Breast epithelium (tissue), 4 donors: ENCODE measurements at regions of chr1 and their contacts with region 1.

Region 1: GRCh38 chr1:244386595-244386994 is 65.1 kb downstream of the ADSS2 start:
- DNase-seq: no peak
- H3K4me3 ChIP-seq: no peak overlapping the region
- H3K27ac ChIP-seq: no peak overlapping the region
- H3K4me1 ChIP-seq: no peaks in the 10 kb centered on the region
- H3K27me3 ChIP-seq: no peaks in the 10 kb centered on the region
- CTCF ChIP-seq: no peak
- POLR2A ChIP-seq: no peak

Region 2: DNA sequence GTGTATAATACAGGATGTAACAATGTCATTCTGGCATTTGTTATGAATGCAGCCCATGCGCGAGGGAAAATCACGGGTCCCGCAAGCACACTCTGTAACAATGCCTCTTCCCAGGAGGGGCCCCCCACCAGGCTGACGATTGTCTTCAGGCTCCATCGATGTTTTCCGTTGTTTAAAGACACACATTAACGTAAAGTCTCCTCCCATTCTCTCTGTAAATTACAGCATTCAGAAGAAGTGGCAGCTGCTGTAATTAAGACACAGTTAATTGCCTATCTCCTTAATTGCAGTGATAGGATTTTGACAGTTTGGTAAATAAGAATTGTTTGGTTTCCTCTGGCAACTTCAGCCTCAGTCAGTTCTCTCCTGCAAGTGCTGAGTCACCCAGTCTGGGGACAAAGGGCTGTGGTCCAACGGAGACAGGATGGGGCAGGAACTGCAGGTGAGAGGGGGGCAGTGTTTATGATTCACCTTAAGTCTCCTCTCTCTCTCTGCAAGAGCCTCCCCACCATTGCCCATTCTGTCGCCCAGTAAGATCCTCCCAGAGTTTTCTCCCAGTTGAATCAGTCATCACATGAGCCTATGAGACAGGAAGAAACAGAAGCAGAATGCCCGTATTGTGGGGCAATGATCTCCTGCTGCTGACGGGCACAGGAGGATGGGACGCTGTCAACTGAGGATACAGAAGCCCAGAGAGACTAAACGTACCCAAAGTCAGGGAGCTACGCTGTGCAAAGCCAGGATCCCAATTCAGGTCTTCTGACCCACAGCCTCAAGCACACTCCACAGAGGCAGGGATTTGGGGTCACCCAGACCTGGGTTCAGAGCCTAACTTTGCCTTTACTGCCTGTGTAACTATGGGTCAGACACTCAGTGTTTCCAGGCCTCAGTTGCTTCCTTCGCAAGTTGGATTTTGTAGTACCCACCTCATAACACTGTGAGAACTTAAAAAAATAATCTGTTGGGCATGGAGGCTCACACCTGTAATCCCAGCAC is 44.8 kb before region 1 on chr1:
- intact Hi-C with region 1: no loop called
- DNase-seq: peak in 1 of 2 donors; percentile 43
- H3K4me3 ChIP-seq: no peak overlapping the region
- H3K27ac ChIP-seq: no peak overlapping the region
- H3K4me1 ChIP-seq: no peaks in the 10 kb centered on the region
- H3K27me3 ChIP-seq: no peaks in the 10 kb centered on the region
- CTCF ChIP-seq: peak in 1 of 3 donors; percentile 10
- POLR2A ChIP-seq: no peak

Region 3: DNA sequence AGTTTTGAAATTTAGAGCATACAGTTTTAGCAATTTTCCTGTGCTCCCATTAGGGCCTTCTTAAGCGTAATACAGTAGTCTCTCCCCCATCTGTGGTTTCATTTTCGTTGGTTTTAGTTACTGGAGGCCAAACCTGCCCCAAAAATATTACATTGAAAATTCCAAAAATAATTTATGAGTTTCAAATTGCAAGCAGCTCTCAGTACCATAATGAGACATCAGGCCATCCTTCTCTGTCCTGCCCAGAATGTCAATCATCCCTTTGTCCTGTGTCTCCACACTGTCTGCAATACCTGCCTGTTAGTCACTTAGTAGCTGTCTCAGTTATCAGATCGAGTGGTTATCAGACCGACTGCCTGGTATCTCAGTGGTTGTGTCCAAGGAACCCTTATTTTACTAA is 19.7 kb after region 1 on chr1:
- intact Hi-C with region 1: loop called (anchors 1 kb)
- DNase-seq: no peak
- H3K4me3 ChIP-seq: no peak overlapping the region
- H3K27ac ChIP-seq: no peak overlapping the region
- H3K4me1 ChIP-seq: no peaks in the 10 kb centered on the region
- H3K27me3 ChIP-seq: no peaks in the 10 kb centered on the region
- CTCF ChIP-seq: no peak
- POLR2A ChIP-seq: no peak